ENCODE measurements at regions of chr2 and their contacts with region 1.

Region 1: GRCh38 chr2:96536445-96537065 is at the start of gene ARID5A:
- DNase-seq: peak; percentile 82 to 93 (median 88)
- ATAC-seq: peak; percentile 70
- H3K4me3 ChIP-seq: peak within 1 kb of the TSS; percentile 84
- H3K4me3 Mint-ChIP-seq: peak within 1 kb of the TSS; percentile 91 to 98 (median 96)
- H3K27ac ChIP-seq: peak within 1 kb of the TSS; percentile 99
- H3K27ac Mint-ChIP-seq: peak within 1 kb of the TSS; percentile 97 to 100 (median 99)
- H3K4me1 ChIP-seq: peaks cover 39 to 41% of the 10 kb centered on the region in 2 donors
- H3K4me1 Mint-ChIP-seq: peaks cover 37 to 74% (median 50%) of the 10 kb centered on the region in 7 donors
- H3K27me3 ChIP-seq: no peaks in the 10 kb centered on the region
- H3K27me3 Mint-ChIP-seq: no peaks in the 10 kb centered on the region
- total RNA-seq, gene ARID5A: 82.4 to 182 (median 113) TPM

Region 2: GRCh38 chr2:96145036-96145847 is 391.3 kb before region 1 on chr2 and contains the start of gene DUSP2:
- CTCF ChIA-PET with region 1: no interaction called
- POLR2A ChIA-PET with region 1: interaction called, 8 read pairs
- intact Hi-C with region 1: loop called (anchors 1 to 2 kb)
- DNase-seq: peak; percentile 79 to 97 (median 83)
- ATAC-seq: peak; percentile 61
- H3K4me3 ChIP-seq: peak within 1 kb of the TSS; percentile 69
- H3K4me3 Mint-ChIP-seq: peak within 1 kb of the TSS; percentile 90 to 98 (median 95)
- H3K27ac ChIP-seq: peak within 1 kb of the TSS; percentile 99
- H3K27ac Mint-ChIP-seq: peak within 1 kb of the TSS; percentile 96 to 100 (median 99)
- H3K4me1 ChIP-seq: peaks cover 50 to 52% of the 10 kb centered on the region in 2 donors
- H3K4me1 Mint-ChIP-seq: peaks cover 35 to 69% (median 62%) of the 10 kb centered on the region in 7 donors
- H3K27me3 ChIP-seq: no peaks in the 10 kb centered on the region
- H3K27me3 Mint-ChIP-seq: no peaks in the 10 kb centered on the region
- total RNA-seq, gene DUSP2: 22.1 to 255 (median 50.3) TPM

Region 3: GRCh38 chr2:96305091-96305978 is 231.2 kb before region 1 on chr2 and contains the start of gene SNRNP200:
- CTCF ChIA-PET with region 1: interaction called, 3 read pairs
- POLR2A ChIA-PET with region 1: interaction called, 14 read pairs
- intact Hi-C with region 1: loop called in 1 of 2 experiments (anchors 1 kb)
- DNase-seq: peak; percentile 77 to 92 (median 90)
- ATAC-seq: peak; percentile 96
- H3K4me3 ChIP-seq: peak within 1 kb of the TSS; percentile 85
- H3K4me3 Mint-ChIP-seq: peak within 1 kb of the TSS; percentile 94 to 100 (median 99)
- H3K27ac ChIP-seq: peak within 1 kb of the TSS; percentile 94
- H3K27ac Mint-ChIP-seq: peak within 1 kb of the TSS; percentile 97 to 100 (median 99)
- H3K4me1 ChIP-seq: peaks cover 30 to 41% of the 10 kb centered on the region in 2 donors
- H3K4me1 Mint-ChIP-seq: peaks cover 41 to 61% (median 58%) of the 10 kb centered on the region in 7 donors
- H3K27me3 ChIP-seq: no peaks in the 10 kb centered on the region
- H3K27me3 Mint-ChIP-seq: no peaks in the 10 kb centered on the region
- total RNA-seq, gene SNRNP200: 165 to 255 (median 212) TPM

Region 4: DNA sequence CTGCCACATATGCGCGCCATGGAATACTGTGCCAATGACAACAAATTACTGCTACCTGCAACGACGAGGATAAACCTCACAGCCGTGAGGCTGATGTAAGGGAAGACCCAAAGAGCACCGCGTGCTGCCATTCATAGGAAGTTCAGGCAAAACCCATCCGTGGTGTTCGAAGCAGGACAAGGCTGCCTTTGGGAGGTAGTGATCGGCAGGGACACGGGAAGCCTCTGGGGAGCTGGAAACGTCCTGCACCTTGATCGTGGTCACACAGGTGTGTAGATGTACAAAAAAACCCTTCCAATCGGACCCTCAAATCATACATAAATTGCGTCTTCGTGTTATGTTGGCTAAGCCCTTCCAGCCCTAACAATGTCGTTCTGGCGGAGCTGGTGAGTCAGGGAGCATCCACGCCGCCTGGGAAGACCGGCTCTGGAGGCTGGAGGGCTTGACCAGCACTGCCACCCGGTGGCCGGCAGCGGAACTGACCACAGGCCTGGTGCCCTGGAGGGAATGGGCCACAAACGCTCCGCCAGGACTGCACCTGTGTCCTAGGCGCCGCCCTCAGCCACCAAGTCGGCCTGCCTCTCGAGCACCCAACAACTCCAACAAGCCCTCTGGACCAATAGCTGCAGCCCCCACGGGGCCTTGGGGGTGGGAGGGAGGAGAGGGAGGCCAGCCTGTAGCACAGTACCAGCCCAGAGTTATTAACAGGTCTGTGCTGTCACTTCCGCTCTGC is 27.3 kb before region 1 on chr2:
- CTCF ChIA-PET with region 1: interaction called, 4 read pairs
- POLR2A ChIA-PET with region 1: interaction called, 4 read pairs
- intact Hi-C with region 1: loop called in 1 of 2 experiments (anchors 1 kb)
- DNase-seq: peak in 4 of 9 donors; percentile 32 to 79 (median 44)
- ATAC-seq: peak; percentile 64
- H3K4me3 ChIP-seq: no peak overlapping the region
- H3K4me3 Mint-ChIP-seq: peak overlapping the region in 7 of 10 donors; percentile 3 to 66 (median 40)
- H3K27ac ChIP-seq: no peak overlapping the region
- H3K27ac Mint-ChIP-seq: peak overlapping the region in 5 of 9 donors; percentile 28 to 74 (median 66)
- H3K4me1 ChIP-seq: peaks cover 3 to 4% of the 10 kb centered on the region in 2 donors
- H3K4me1 Mint-ChIP-seq: peaks cover 8 to 51% (median 13%) of the 10 kb centered on the region in 7 donors
- H3K27me3 ChIP-seq: no peaks in the 10 kb centered on the region
- H3K27me3 Mint-ChIP-seq: peaks cover 3 to 25% (median 17%) of the 10 kb centered on the region in 5 donors

Region 5: DNA sequence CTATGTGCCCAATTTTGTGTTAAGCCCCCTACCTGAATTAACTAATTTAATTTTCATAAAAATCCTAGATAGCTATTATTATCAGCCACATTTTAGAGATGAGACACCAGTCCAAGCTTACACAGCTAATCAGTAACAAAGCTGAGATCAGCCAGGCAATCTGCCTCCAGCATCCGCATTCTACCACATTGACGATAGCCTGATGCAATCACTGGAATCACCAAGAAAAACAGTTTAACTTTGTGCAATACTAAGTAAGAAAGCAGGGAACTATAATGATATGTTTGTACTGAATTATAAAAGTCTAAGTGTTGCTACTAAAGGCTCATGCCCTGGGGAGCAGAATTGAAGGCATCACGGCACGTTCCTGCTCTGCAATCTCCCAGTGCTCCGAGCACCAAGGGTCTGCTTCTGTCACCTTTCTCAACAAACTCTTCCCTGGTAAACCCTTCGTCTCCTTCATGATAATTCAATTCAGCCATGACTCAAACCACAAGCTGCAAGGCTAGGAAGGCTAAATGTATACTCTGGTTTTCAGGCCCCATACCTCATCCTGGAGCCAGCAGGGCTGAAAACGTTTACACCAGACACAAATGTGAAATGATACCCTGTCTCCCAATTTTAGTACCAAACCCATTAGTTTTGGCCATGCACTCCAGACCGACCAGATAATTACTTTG is 82.2 kb after region 1 on chr2:
- CTCF ChIA-PET with region 1: no interaction called
- POLR2A ChIA-PET with region 1: interaction called, 3 read pairs
- intact Hi-C with region 1: loop called in 1 of 2 experiments (anchors 5 kb)
- DNase-seq: no peak
- ATAC-seq: peak; percentile 57
- H3K4me3 ChIP-seq: no peak overlapping the region
- H3K4me3 Mint-ChIP-seq: no peak overlapping the region
- H3K27ac ChIP-seq: no peak overlapping the region
- H3K27ac Mint-ChIP-seq: peak overlapping the region in 2 of 9 donors; percentile 3 to 63
- H3K4me1 ChIP-seq: peaks cover 0 to 6% of the 10 kb centered on the region in 2 donors
- H3K4me1 Mint-ChIP-seq: peaks cover 18 to 43% (median 30%) of the 10 kb centered on the region in 7 donors
- H3K27me3 ChIP-seq: no peaks in the 10 kb centered on the region
- H3K27me3 Mint-ChIP-seq: no peaks in the 10 kb centered on the region

Region 6: DNA sequence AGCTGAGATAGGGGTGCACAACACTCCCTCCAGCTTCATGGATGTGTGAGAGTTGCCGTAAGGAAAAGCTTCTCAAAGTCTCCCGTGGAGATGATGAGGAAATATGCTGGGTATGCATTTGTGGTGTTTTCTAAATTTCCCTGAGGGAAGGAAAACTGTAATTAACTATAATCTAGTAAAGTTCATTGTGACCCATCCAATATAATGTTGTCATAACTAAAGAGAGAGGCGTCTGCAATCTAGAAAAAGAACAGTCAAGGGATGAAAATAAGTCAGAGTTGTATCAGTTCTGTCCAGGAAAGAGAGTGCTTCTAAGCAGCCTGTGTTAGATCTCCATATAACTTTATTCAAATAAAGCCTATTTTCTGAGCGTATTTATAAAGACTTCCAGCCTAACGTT is 210.6 kb after region 1 on chr2:
- CTCF ChIA-PET with region 1: no interaction called
- POLR2A ChIA-PET with region 1: no interaction called
- intact Hi-C with region 1: no loop called
- DNase-seq: no peak
- ATAC-seq: no peak
- H3K4me3 ChIP-seq: no peak overlapping the region
- H3K4me3 Mint-ChIP-seq: no peak overlapping the region
- H3K27ac ChIP-seq: no peak overlapping the region
- H3K27ac Mint-ChIP-seq: no peak overlapping the region
- H3K4me1 ChIP-seq: no peaks in the 10 kb centered on the region
- H3K4me1 Mint-ChIP-seq: peaks cover 0 to 4% (median 0%) of the 10 kb centered on the region in 7 donors
- H3K27me3 ChIP-seq: no peaks in the 10 kb centered on the region
- H3K27me3 Mint-ChIP-seq: peaks cover 0 to 25% (median 0%) of the 10 kb centered on the region in 5 donors

Region 7: DNA sequence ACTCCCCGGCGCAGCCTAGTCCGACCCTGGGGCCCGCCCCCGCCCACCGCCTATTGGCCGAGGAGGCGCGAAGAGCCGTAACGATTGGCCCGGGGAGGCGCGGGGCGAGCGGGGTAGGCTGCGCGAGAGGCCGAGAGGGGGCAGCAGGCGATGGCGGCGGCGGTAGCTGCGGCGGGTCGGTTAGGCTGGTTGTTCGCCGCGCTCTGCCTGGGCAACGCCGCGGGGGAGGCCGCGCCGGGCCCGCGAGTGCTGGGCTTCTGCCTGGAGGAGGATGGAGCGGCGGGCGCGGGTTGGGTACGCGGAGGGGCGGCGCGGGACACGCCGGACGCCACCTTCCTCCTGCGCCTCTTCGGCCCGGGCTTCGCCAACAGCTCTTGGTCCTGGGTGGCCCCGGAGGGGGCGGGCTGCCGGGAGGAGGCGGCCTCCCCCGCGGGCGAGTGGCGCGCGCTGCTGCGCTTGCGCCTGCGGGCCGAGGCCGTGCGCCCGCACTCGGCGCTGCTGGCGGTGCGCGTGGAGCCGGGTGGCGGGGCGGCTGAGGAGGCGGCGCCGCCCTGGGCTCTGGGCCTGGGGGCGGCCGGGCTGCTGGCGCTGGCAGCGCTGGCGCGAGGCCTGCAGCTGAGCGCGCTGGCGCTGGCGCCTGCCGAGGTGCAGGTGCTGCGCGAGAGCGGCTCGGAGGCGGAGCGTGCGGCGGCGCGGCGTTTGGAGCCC is 279.7 kb after region 1 on chr2 and contains the start of gene CNNM3:
- CTCF ChIA-PET with region 1: no interaction called
- POLR2A ChIA-PET with region 1: interaction called, 3 read pairs
- intact Hi-C with region 1: loop called in 1 of 2 experiments (anchors 5 kb)
- DNase-seq: peak; percentile 89 to 99 (median 93)
- ATAC-seq: peak; percentile 96
- H3K4me3 ChIP-seq: peak within 1 kb of the TSS; percentile 74
- H3K4me3 Mint-ChIP-seq: peak within 1 kb of the TSS; percentile 86 to 96 (median 92)
- H3K27ac ChIP-seq: peak within 1 kb of the TSS; percentile 79
- H3K27ac Mint-ChIP-seq: peak within 1 kb of the TSS; percentile 75 to 96 (median 86)
- H3K4me1 ChIP-seq: peaks cover 37 to 43% of the 10 kb centered on the region in 2 donors
- H3K4me1 Mint-ChIP-seq: peaks cover 36 to 62% (median 58%) of the 10 kb centered on the region in 7 donors
- H3K27me3 ChIP-seq: no peaks in the 10 kb centered on the region
- H3K27me3 Mint-ChIP-seq: no peaks in the 10 kb centered on the region
- total RNA-seq, gene CNNM3: 32.1 to 51.5 (median 44.6) TPM

Measured in naive thymus-derived CD4-positive, alpha-beta T cell (primary cell).